Activated CD4-positive, alpha-beta T cell treated with anti-CD3 and anti-CD28 coated beads, Interleukin-2, amount 10 ng/mL, durations not matched to agents 7 days and 5 days (primary cell): ENCODE measurements at regions of chr1 and their contacts with region 1.

Region 1: GRCh38 chr1:205631727-205632373 is at the start of gene ELK4:
- DNase-seq: peak; percentile 99
- H3K4me3 Mint-ChIP-seq: peak within 1 kb of the TSS; percentile 81
- H3K27ac Mint-ChIP-seq: peak within 1 kb of the TSS; percentile 95
- H3K4me1 Mint-ChIP-seq: peaks cover 39% of the 10 kb centered on the region
- H3K27me3 Mint-ChIP-seq: peaks cover 5% of the 10 kb centered on the region
- total RNA-seq, gene ELK4: 99.4 to 103 TPM

Region 2: GRCh38 chr1:205600085-205600484 is 31.8 kb before region 1 on chr1:
- CTCF ChIA-PET with region 1: interaction called, 105 read pairs
- POLR2A ChIA-PET with region 1: interaction called, 3 read pairs
- DNase-seq: no peak
- H3K4me3 Mint-ChIP-seq: no peak overlapping the region
- H3K27ac Mint-ChIP-seq: peak overlapping the region; percentile 56
- H3K4me1 Mint-ChIP-seq: peaks cover 40% of the 10 kb centered on the region
- H3K27me3 Mint-ChIP-seq: no peaks in the 10 kb centered on the region

Region 3: GRCh38 chr1:205645519-205645918 is 13.7 kb after region 1 on chr1:
- CTCF ChIA-PET with region 1: interaction called, 17 read pairs
- POLR2A ChIA-PET with region 1: no interaction called
- DNase-seq: no peak
- H3K4me3 Mint-ChIP-seq: no peak overlapping the region
- H3K27ac Mint-ChIP-seq: no peak overlapping the region
- H3K4me1 Mint-ChIP-seq: no peaks in the 10 kb centered on the region
- H3K27me3 Mint-ChIP-seq: peaks cover 3% of the 10 kb centered on the region